ENCODE measurements at regions of chr16 and their contacts with region 1.

Region 1: GRCh38 chr16:81505011-81505661 is 60.5 kb downstream of the CMIP start:
- DNase-seq: no peak
- ATAC-seq: peak; percentile 7
- H3K4me3 Mint-ChIP-seq: peak overlapping the region; percentile 67
- H3K27ac Mint-ChIP-seq: peak overlapping the region; percentile 92
- H3K4me1 Mint-ChIP-seq: peaks cover 76% of the 10 kb centered on the region
- H3K27me3 Mint-ChIP-seq: no peaks in the 10 kb centered on the region
- CTCF ChIP-seq: no peak

Region 2: GRCh38 chr16:81416749-81417148 is 88.4 kb before region 1 on chr16:
- CTCF ChIA-PET with region 1: no interaction called
- POLR2A ChIA-PET with region 1: no interaction called
- intact Hi-C with region 1: no loop called
- DNase-seq: no peak
- ATAC-seq: no peak
- H3K4me3 Mint-ChIP-seq: no peak overlapping the region
- H3K27ac Mint-ChIP-seq: no peak overlapping the region
- H3K4me1 Mint-ChIP-seq: peaks cover 16% of the 10 kb centered on the region
- H3K27me3 Mint-ChIP-seq: no peaks in the 10 kb centered on the region
- CTCF ChIP-seq: no peak

Region 3: GRCh38 chr16:81429045-81429521 is 76.1 kb before region 1 on chr16:
- CTCF ChIA-PET with region 1: interaction called, 8 read pairs
- POLR2A ChIA-PET with region 1: interaction called, 21 read pairs
- intact Hi-C with region 1: loop called (anchors 1 kb)
- DNase-seq: no peak
- ATAC-seq: peak; percentile 49
- H3K4me3 Mint-ChIP-seq: no peak overlapping the region
- H3K27ac Mint-ChIP-seq: peak overlapping the region; percentile 5
- H3K4me1 Mint-ChIP-seq: peaks cover 43% of the 10 kb centered on the region
- H3K27me3 Mint-ChIP-seq: no peaks in the 10 kb centered on the region
- CTCF ChIP-seq: no peak

Region 4: DNA sequence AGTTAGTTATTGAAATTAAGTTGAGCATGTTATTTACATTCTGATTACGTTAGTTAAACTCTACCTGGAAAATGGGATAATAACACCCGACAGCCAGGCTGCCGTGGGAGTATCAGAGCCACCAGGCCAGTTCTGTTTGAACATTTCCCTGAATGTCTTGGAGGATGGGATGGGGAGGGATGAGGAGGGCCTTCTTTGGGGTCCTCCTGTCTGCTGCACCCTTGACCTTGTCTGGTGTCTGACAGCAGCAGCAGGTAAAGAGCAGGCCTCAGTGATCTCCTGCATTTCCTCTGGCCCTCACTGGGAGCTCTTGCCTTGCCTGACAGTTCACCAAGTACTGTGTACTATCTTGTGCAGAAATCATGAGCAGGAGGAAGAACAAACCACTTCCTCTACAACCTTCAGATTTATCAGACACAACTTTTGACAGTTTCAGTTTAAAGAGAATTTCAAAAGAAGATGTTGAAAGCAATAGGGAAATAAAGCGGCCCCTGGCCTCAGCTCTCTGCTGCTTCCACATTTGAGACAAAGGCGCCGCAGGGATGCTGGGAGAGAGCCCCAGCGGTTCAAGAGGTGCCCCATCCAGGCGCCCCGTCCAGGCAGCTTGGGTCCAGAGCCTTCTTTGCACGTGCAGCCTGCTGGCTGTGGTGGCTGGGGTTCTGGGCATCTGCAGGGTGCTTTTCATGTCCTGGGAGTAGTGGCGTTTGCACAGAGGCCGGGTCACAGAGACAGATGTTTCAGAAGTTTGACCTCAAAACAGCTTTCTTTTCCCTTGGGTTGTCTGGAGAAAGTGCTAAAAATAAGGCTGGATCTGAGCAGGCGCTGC is 35.2 kb before region 1 on chr16:
- CTCF ChIA-PET with region 1: interaction called, 6 read pairs
- POLR2A ChIA-PET with region 1: interaction called, 307 read pairs
- intact Hi-C with region 1: loop called (anchors 5 kb)
- DNase-seq: no peak
- ATAC-seq: peak; percentile 88
- H3K4me3 Mint-ChIP-seq: peak overlapping the region; percentile 66
- H3K27ac Mint-ChIP-seq: peak overlapping the region; percentile 84
- H3K4me1 Mint-ChIP-seq: peaks cover 82% of the 10 kb centered on the region
- H3K27me3 Mint-ChIP-seq: no peaks in the 10 kb centered on the region
- CTCF ChIP-seq: no peak

Region 5: GRCh38 chr16:81493755-81494433 is 11.2 kb before region 1 on chr16:
- CTCF ChIA-PET with region 1: no interaction called
- POLR2A ChIA-PET with region 1: interaction called, 27 read pairs
- intact Hi-C with region 1: loop called (anchors 1 kb)
- DNase-seq: no peak
- ATAC-seq: no peak
- H3K4me3 Mint-ChIP-seq: no peak overlapping the region
- H3K27ac Mint-ChIP-seq: no peak overlapping the region
- H3K4me1 Mint-ChIP-seq: peaks cover 80% of the 10 kb centered on the region
- H3K27me3 Mint-ChIP-seq: no peaks in the 10 kb centered on the region
- CTCF ChIP-seq: no peak

Region 6: GRCh38 chr16:81610144-81610842 is 105.2 kb after region 1 on chr16:
- CTCF ChIA-PET with region 1: no interaction called
- POLR2A ChIA-PET with region 1: no interaction called
- intact Hi-C with region 1: no loop called
- DNase-seq: no peak
- ATAC-seq: no peak
- H3K4me3 Mint-ChIP-seq: no peak overlapping the region
- H3K27ac Mint-ChIP-seq: no peak overlapping the region
- H3K4me1 Mint-ChIP-seq: peaks cover 34% of the 10 kb centered on the region
- H3K27me3 Mint-ChIP-seq: no peaks in the 10 kb centered on the region
- CTCF ChIP-seq: no peak

Region 7: DNA sequence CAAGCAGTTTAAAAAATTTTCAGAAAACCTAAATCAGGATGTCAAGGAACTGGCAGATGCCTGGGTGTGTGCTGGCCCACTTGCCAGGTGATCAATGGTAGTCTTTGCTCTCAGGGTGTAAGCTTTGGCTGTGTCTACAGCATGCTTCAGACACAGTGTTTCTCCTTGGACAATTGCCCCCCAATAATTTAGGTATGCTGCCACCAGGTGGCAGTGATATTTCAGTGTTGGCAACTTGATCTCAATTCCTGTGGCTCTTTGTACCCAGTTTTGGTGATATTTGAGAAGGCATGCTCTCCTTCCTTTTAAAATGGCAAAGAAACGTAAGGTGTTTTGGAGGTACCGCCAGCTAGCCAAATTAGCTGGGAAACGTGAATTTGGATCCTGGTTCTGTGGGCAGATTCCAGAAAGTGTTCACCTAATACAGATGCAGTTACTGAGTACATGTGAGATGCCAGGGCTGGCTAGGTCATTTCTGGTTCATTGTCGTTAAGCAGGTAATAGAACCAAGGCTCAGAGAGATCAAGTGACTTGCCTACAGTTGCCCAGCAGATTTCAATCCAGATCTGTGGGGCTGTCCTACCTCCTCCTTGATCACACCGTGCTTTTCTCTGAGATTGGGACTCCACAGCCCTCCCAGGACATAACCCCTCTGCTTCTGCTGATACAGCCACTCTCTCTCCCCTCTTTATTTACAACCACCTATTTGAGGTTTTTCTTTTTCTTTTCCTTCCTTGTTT is 118.4 kb after region 1 on chr16:
- CTCF ChIA-PET with region 1: no interaction called
- POLR2A ChIA-PET with region 1: no interaction called
- intact Hi-C with region 1: loop called (anchors 1 kb)
- DNase-seq: no peak
- ATAC-seq: peak; percentile 41
- H3K4me3 Mint-ChIP-seq: no peak overlapping the region
- H3K27ac Mint-ChIP-seq: no peak overlapping the region
- H3K4me1 Mint-ChIP-seq: peaks cover 17% of the 10 kb centered on the region
- H3K27me3 Mint-ChIP-seq: no peaks in the 10 kb centered on the region
- CTCF ChIP-seq: no peak

Region 8: DNA sequence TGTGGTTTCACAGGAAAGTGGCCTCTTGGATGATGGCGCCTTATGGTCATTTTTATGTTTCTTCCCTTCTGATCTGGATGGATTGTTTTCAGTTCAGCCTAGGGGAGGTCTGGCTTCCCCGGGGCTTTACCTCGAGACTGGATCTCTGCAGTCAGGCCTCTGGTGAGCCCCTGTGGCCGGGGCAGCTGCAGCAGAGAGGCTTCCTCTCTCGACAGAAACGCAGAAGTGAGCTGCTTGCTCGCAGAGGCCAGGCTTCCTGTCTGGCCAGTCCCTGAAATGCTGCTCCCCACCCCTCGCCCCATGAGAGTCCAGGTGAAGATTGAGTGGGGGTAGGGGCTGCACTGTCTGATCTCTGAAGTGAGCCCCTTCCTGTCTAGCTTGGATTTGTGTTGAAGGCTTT is 318.0 kb after region 1 on chr16:
- CTCF ChIA-PET with region 1: no interaction called
- POLR2A ChIA-PET with region 1: interaction called, 6 read pairs
- intact Hi-C with region 1: loop called (anchors 10 kb)
- DNase-seq: peak; percentile 67
- ATAC-seq: peak; percentile 65
- H3K4me3 Mint-ChIP-seq: peak overlapping the region; percentile 80
- H3K27ac Mint-ChIP-seq: peak overlapping the region; percentile 97
- H3K4me1 Mint-ChIP-seq: peaks cover 99% of the 10 kb centered on the region
- H3K27me3 Mint-ChIP-seq: no peaks in the 10 kb centered on the region
- CTCF ChIP-seq: no peak